ENCODE measurements at regions of chr15 and their contacts with region 1.

Region 1: GRCh38 chr15:40421246-40422157 is 15.9 kb downstream of the IVD start:
- DNase-seq: peak; percentile 41 to 85 (median 75)
- ATAC-seq: peak; percentile 89 to 98 (median 96)
- H3K4me3 ChIP-seq: no peak overlapping the region
- H3K4me3 Mint-ChIP-seq: no peak overlapping the region
- H3K27ac ChIP-seq: no peak overlapping the region
- H3K27ac Mint-ChIP-seq: no peak overlapping the region
- H3K4me1 ChIP-seq: peaks cover 0 to 7% of the 10 kb centered on the region in 2 experiments
- H3K4me1 Mint-ChIP-seq: peaks cover 0 to 5% (median 5%) of the 10 kb centered on the region in 3 donors
- H3K27me3 ChIP-seq: peaks cover 0 to 3% of the 10 kb centered on the region in 2 experiments
- H3K27me3 Mint-ChIP-seq: no peaks in the 10 kb centered on the region

Region 2: GRCh38 chr15:40344631-40345120 is 76.8 kb before region 1 on chr15:
- CTCF ChIA-PET with region 1: interaction called, 5 to 14 read pairs
- POLR2A ChIA-PET with region 1: no interaction called
- DNase-seq: peak; percentile 40 to 78 (median 61)
- ATAC-seq: peak; percentile 80 to 90 (median 85)
- H3K4me3 ChIP-seq: no peak overlapping the region
- H3K4me3 Mint-ChIP-seq: no peak overlapping the region
- H3K27ac ChIP-seq: no peak overlapping the region
- H3K27ac Mint-ChIP-seq: no peak overlapping the region
- H3K4me1 ChIP-seq: peaks cover 0 to 7% of the 10 kb centered on the region in 2 experiments
- H3K4me1 Mint-ChIP-seq: peaks cover 0 to 6% (median 0%) of the 10 kb centered on the region in 3 donors
- H3K27me3 ChIP-seq: peaks cover 0 to 18% of the 10 kb centered on the region in 2 experiments
- H3K27me3 Mint-ChIP-seq: no peaks in the 10 kb centered on the region

Measured in T-cell (primary cell).